ENCODE measurements at regions of chr1 and their contacts with region 1.

Region 1: DNA sequence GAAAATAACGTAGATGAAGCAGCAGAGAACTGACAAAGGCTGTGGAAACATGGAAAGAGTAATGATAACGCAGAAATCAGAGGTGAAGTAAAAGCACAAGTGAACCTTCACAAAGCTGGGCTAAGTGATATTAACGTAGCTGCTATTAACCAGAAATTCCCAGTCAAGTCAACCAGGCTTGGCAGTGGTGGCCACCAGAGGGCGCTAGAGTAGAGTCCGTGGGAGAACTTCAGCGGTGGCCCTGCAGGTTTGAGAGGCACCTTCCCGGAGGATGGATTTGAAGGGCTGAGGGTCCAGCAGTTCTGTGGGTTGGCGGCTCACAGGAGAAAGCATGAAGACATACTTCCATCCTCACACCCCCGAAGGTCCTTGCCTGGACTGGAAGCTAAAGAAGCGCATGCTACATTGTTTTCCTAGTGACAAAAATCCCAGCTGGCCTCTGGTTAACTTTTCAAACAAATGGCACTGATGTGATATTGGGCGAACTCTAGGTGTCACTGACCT is 81.7 kb upstream of the ZNF648 start:
- DNase-seq: peak; percentile 74
- H3K4me3 Mint-ChIP-seq: no peak overlapping the region
- H3K27ac Mint-ChIP-seq: no peak overlapping the region
- H3K4me1 Mint-ChIP-seq: peaks cover 38% of the 10 kb centered on the region
- H3K27me3 Mint-ChIP-seq: peaks cover 2% of the 10 kb centered on the region

Region 2: GRCh38 chr1:182041615-182042014 is 101.6 kb before region 1 on chr1:
- intact Hi-C with region 1: no loop called
- DNase-seq: no peak
- H3K4me3 Mint-ChIP-seq: no peak overlapping the region
- H3K27ac Mint-ChIP-seq: no peak overlapping the region
- H3K4me1 Mint-ChIP-seq: peaks cover 20% of the 10 kb centered on the region
- H3K27me3 Mint-ChIP-seq: peaks cover 3% of the 10 kb centered on the region

Region 3: GRCh38 chr1:182198049-182198501 is 54.9 kb after region 1 on chr1:
- intact Hi-C with region 1: loop called (anchors 5 kb)
- DNase-seq: no peak
- H3K4me3 Mint-ChIP-seq: no peak overlapping the region
- H3K27ac Mint-ChIP-seq: no peak overlapping the region
- H3K4me1 Mint-ChIP-seq: no peaks in the 10 kb centered on the region
- H3K27me3 Mint-ChIP-seq: peaks cover 11% of the 10 kb centered on the region

Region 4: GRCh38 chr1:182301467-182302198 is 158.4 kb after region 1 on chr1:
- intact Hi-C with region 1: loop called (anchors 5 kb)
- DNase-seq: peak; percentile 9
- H3K4me3 Mint-ChIP-seq: peak overlapping the region; percentile 37
- H3K27ac Mint-ChIP-seq: peak overlapping the region; percentile 88
- H3K4me1 Mint-ChIP-seq: peaks cover 51% of the 10 kb centered on the region
- H3K27me3 Mint-ChIP-seq: no peaks in the 10 kb centered on the region

Region 5: GRCh38 chr1:182397771-182398393 is 254.7 kb after region 1 on chr1:
- intact Hi-C with region 1: loop called (anchors 1 kb)
- DNase-seq: no peak
- H3K4me3 Mint-ChIP-seq: no peak overlapping the region
- H3K27ac Mint-ChIP-seq: no peak overlapping the region
- H3K4me1 Mint-ChIP-seq: peaks cover 13% of the 10 kb centered on the region
- H3K27me3 Mint-ChIP-seq: peaks cover 13% of the 10 kb centered on the region

Region 6: GRCh38 chr1:182789138-182790076 is 646.2 kb after region 1 on chr1 and contains the start of gene NPL:
- intact Hi-C with region 1: loop called (anchors 2 kb)
- DNase-seq: peak; percentile 86
- H3K4me3 Mint-ChIP-seq: peak within 1 kb of the TSS; percentile 92
- H3K27ac Mint-ChIP-seq: peak within 1 kb of the TSS; percentile 86
- H3K4me1 Mint-ChIP-seq: peaks cover 18% of the 10 kb centered on the region
- H3K27me3 Mint-ChIP-seq: peaks cover 14% of the 10 kb centered on the region
- total RNA-seq, gene NPL: 6.4 and 6.9 TPM in 2 replicates

Measured in activated T-helper 1 cell treated with anti-CD3 and anti-CD28 coated beads, Interleukin-12 subunit alpha, Interleukin-12 subunit beta, Interleukin-2, Interleukin-4 antibody, amounts not matched to agents 30 ng/mL and 10 ng/mL and 1 ng/mL, durations not matched to agents 14 hours and 24 hours and 36 hours (primary cell).